Activated T-helper 1 cell treated with anti-CD3 and anti-CD28 coated beads, Interleukin-12 subunit alpha, Interleukin-12 subunit beta, Interleukin-2, Interleukin-4 antibody, amounts not matched to agents 30 ng/mL and 10 ng/mL and 1 ng/mL, durations not matched to agents 14 hours and 24 hours and 36 hours (primary cell): ENCODE measurements at regions of chr3 and their contacts with region 1.

Region 1: GRCh38 chr3:50519471-50520089 is 16.1 kb upstream of the CACNA2D2 start:
- DNase-seq: peak; percentile 64
- H3K4me3 Mint-ChIP-seq: no peak overlapping the region
- H3K27ac Mint-ChIP-seq: no peak overlapping the region
- H3K4me1 Mint-ChIP-seq: peaks cover 5% of the 10 kb centered on the region
- H3K27me3 Mint-ChIP-seq: peaks cover 11% of the 10 kb centered on the region

Region 2: GRCh38 chr3:50050361-50050760 is 469.2 kb before region 1 on chr3:
- intact Hi-C with region 1: no loop called
- DNase-seq: no peak
- H3K4me3 Mint-ChIP-seq: no peak overlapping the region
- H3K27ac Mint-ChIP-seq: no peak overlapping the region
- H3K4me1 Mint-ChIP-seq: peaks cover 7% of the 10 kb centered on the region
- H3K27me3 Mint-ChIP-seq: no peaks in the 10 kb centered on the region

Region 3: DNA sequence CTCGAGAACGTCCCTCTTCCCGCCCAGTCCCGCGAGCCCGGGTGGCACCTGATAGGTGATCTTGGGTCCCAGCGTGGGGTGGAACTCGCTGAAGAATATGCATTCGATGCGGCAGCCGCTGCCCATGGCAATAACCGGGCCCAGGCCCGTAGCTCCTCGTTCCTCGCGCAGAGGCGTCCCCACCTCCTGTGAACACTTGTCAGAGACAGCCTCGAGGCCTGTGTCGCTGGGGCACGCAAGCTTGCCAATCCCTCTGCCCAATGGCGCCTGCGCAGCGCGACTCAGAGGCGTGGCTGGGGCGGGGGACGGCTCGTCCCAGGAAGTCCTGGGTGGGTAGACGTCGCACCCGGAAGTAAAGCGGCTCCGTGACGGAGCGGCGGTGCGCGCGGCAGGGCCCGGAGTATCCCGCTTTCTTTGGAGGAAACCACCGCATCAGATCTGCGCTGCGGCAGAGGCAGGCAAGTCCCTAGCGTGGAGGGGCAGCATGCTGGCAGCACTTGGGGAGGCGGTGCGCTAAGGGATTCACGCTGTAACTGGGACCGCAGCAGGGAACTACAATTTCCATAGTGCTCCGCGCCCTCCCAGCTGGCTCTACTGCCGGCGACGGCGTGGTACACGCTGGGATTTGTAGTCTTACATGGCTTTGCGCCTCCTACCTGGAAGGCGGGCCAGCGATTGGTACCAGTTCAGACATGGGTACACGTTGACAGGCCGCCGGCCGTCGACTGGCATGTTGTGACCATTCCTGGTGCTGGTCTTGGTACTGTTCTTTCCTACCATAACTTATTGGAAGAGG is 168.9 kb before region 1 on chr3 and contains the starts of genes CYB561D2 and NPRL2:
- intact Hi-C with region 1: loop called (anchors 1 kb)
- DNase-seq: peak; percentile 100
- H3K4me3 Mint-ChIP-seq: peak within 1 kb of the TSS; percentile 95
- H3K27ac Mint-ChIP-seq: peak within 1 kb of the TSS; percentile 95
- H3K4me1 Mint-ChIP-seq: peaks cover 55% of the 10 kb centered on the region
- H3K27me3 Mint-ChIP-seq: no peaks in the 10 kb centered on the region
- total RNA-seq, gene CYB561D2: 30.0 and 35.9 TPM in 2 replicates
- total RNA-seq, gene NPRL2: 43.7 and 46.6 TPM in 2 replicates

Region 4: GRCh38 chr3:50503504-50504342 is 15.9 kb before region 1 on chr3 and contains the start of gene CACNA2D2:
- intact Hi-C with region 1: no loop called
- DNase-seq: peak; percentile 44
- H3K4me3 Mint-ChIP-seq: peak within 1 kb of the TSS; percentile 65
- H3K27ac Mint-ChIP-seq: peak within 1 kb of the TSS; percentile 34
- H3K4me1 Mint-ChIP-seq: no peaks in the 10 kb centered on the region
- H3K27me3 Mint-ChIP-seq: peaks cover 56% of the 10 kb centered on the region
- total RNA-seq, gene CACNA2D2: 0.52 and 0.78 TPM in 2 replicates

Region 5: DNA sequence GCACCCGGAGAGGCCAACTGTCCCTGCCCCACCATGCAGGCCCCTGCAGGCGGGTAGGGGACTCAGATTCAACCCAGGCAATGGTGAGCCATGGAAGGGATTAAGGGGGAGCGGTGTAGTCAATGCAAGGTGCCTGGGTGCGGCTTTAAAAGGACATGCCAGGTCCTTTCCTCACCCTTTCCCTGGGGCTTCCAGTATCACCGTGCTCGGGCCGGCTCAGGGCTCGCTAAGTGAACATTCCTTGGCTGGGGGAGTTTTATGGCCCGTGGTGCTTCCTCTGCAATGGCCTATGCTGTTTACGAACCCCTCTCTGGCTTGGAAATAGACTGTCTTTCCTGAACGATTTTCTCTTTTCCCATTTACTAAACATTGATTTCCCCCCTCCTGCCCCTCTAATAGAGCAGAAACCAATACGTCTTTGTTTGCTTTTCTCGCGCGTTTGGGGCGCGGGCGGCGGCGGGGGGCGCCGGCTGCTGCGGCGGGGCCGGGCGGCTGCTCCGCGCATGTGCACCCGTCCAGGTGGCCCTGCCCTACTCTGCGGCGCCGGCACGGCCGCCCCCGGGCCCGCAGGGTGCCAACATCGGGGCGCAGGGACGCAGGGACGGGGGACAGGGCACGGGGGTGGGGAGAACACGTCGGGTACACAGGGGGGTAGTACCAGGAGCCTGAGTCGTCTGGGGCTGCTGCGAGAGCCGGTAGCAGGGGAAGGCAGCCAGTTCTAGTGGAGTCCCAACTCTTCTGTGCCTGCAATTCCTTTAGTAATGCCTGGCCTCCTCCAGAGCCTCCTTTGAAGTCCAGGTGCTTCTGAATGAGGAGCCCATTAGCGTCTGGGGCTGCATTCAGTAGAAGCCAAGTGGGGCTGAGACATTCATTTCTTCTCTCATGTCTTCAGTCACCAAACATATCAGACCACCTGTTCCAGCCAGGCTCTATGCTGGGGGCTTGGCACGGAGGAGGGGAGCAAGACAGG is 10.7 kb after region 1 on chr3:
- intact Hi-C with region 1: no loop called
- DNase-seq: no peak
- H3K4me3 Mint-ChIP-seq: no peak overlapping the region
- H3K27ac Mint-ChIP-seq: no peak overlapping the region
- H3K4me1 Mint-ChIP-seq: no peaks in the 10 kb centered on the region
- H3K27me3 Mint-ChIP-seq: peaks cover 45% of the 10 kb centered on the region

Region 6: DNA sequence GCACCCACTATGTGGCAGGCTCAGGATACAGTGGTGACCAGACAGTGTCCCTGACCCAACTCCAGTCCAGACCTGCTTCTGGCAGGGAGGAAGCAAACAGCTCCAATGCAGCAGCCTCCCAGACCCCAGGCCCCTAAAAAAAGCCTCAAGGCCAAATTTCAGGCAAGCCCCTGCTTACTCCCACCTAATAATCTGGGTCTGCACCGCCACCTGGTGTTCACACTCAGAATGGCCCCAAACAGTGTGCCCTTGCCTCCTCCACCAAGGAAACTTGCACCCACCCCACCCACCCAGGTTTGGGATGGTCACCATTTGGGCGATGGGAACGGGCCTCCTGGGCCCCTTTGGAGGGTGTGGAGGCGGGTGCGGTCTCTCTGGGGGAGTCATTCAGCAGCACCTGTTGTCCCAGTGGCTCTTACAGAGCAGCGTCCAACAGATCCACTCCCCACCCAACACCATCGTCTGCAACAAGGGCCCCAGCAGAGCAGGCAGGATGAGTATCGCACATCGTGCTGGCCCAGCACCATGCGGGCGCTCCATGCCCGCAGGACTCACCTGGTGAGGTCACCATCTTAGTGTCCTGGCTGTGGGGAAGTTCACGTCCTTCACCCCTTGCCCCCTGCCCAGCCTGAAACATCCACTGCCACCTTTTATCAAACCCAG is 30.6 kb after region 1 on chr3:
- intact Hi-C with region 1: loop called (anchors 1 kb)
- DNase-seq: peak; percentile 49
- H3K4me3 Mint-ChIP-seq: no peak overlapping the region
- H3K27ac Mint-ChIP-seq: no peak overlapping the region
- H3K4me1 Mint-ChIP-seq: no peaks in the 10 kb centered on the region
- H3K27me3 Mint-ChIP-seq: peaks cover under 1% of the 10 kb centered on the region